ENCODE measurements at regions of chr3 and their contacts with region 1.

Region 1: DNA sequence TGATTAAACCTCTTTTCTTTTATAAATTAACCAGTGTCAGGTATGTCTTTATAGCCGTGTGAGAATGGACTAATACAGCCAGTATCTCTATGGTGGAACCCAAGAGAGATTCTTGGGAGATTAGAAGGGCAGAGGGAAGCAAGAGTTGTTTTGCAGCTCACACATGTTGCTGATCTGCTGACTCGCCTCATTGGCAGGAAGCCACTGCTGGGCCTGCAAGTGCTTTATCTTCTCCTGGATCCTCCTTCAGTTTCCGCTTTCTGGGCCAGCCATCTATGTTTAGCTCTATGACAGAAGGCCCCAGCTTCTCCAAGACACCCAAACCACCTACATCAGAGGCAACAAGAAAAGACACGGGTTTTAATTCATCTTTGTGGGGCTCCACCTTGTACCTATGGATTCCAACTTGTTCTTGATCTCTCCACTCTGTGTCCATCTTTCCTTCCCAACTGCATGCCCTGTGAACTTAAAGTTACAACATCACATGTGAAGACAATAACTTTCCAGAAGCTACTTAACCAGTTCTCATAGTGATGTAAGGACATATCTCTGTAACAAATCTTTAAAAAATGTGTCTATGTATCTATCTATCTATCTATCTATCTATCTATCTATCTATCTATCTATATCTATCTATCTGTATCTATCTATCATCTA is 23.2 kb upstream of the GALNT15 start:
- DNase-seq: no peak
- H3K4me3 ChIP-seq: no peak overlapping the region
- H3K27ac ChIP-seq: no peak overlapping the region
- H3K4me1 ChIP-seq: no peaks in the 10 kb centered on the region
- H3K27me3 ChIP-seq: no peaks in the 10 kb centered on the region
- CTCF ChIP-seq: no peak
- EP300 ChIP-seq: no peak
- POLR2A ChIP-seq: no peak
- RAD21 ChIP-seq: no peak

Region 2: DNA sequence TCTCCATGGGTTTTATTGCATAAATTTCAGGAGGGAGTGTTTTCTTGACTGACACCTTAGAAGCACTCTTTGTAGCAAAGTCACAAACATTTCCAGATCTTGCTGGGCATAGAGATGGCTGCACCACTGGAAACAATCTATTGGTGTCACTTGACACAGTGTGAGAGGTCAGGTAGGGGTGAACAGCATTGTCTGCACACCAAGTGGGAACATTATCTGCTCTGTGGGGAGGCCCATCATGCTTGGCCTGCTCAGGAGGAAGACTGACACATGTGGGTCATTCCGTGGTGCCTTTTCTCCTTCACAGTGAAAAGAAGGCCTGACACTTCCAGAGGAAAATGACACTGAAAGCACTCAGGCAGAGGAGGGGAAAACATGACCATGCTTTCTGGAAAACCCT is 126.7 kb before region 1 on chr3:
- CTCF ChIA-PET with region 1: no interaction called
- POLR2A ChIA-PET with region 1: no interaction called
- DNase-seq: no peak
- H3K4me3 ChIP-seq: no peak overlapping the region
- H3K27ac ChIP-seq: no peak overlapping the region
- H3K4me1 ChIP-seq: no peaks in the 10 kb centered on the region
- H3K27me3 ChIP-seq: no peaks in the 10 kb centered on the region
- CTCF ChIP-seq: no peak
- EP300 ChIP-seq: no peak
- POLR2A ChIP-seq: no peak
- RAD21 ChIP-seq: no peak

Region 3: DNA sequence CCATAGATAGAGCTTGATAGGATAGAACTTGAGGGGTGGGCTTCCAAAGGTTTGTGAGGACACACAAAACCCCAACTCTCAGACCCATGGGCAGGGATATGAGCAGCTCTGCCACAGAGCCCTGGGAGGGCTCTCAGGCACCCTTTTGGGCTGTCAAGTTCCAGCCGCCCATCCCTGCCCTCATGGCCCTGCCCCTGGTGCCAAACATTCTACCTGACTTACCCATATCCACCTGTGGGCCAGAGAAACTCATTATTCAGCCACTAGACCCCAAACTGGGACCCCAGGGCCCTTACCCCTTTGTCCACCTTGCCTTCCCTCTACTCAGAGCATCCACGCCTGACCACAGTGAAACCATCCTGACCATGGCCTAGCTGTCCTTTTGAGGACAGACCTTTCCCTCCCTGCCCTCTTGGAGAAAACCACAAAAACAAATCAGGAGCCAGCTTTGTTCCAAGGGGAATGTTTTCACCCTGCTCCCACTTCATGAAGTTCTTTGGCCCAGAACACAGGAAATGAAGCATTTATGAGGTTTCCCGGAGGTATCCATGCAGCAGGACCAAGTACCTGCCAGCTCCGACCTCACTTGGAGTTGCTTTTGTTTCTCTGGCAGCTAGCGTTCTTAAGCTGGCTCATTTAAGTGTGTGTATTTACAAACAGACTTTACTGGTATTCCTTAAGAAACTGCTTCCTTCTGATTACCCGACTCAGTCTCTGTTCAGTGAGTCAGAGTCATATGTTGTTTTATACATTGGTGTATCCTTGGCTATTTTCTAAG is 10.9 kb before region 1 on chr3:
- CTCF ChIA-PET with region 1: interaction called, 10 read pairs
- POLR2A ChIA-PET with region 1: no interaction called
- DNase-seq: no peak
- H3K4me3 ChIP-seq: no peak overlapping the region
- H3K27ac ChIP-seq: no peak overlapping the region
- H3K4me1 ChIP-seq: no peaks in the 10 kb centered on the region
- H3K27me3 ChIP-seq: no peaks in the 10 kb centered on the region
- CTCF ChIP-seq: no peak
- EP300 ChIP-seq: no peak
- POLR2A ChIP-seq: no peak
- RAD21 ChIP-seq: no peak